ENCODE measurements at regions of chr12 and their contacts with region 1.

Region 1: GRCh38 chr12:120649442-120650232 is 9.2 kb downstream of the CABP1 start:
- DNase-seq: peak in 1 of 3 donors; percentile 19
- ATAC-seq: no peak
- H3K4me3 ChIP-seq: no peak overlapping the region
- H3K27ac ChIP-seq: no peak overlapping the region
- H3K4me1 ChIP-seq: no peaks in the 10 kb centered on the region
- H3K27me3 ChIP-seq: no peaks in the 10 kb centered on the region
- CTCF ChIP-seq: peak in 1 of 4 donors; percentile 4
- POLR2A ChIP-seq: no peak

Region 2: DNA sequence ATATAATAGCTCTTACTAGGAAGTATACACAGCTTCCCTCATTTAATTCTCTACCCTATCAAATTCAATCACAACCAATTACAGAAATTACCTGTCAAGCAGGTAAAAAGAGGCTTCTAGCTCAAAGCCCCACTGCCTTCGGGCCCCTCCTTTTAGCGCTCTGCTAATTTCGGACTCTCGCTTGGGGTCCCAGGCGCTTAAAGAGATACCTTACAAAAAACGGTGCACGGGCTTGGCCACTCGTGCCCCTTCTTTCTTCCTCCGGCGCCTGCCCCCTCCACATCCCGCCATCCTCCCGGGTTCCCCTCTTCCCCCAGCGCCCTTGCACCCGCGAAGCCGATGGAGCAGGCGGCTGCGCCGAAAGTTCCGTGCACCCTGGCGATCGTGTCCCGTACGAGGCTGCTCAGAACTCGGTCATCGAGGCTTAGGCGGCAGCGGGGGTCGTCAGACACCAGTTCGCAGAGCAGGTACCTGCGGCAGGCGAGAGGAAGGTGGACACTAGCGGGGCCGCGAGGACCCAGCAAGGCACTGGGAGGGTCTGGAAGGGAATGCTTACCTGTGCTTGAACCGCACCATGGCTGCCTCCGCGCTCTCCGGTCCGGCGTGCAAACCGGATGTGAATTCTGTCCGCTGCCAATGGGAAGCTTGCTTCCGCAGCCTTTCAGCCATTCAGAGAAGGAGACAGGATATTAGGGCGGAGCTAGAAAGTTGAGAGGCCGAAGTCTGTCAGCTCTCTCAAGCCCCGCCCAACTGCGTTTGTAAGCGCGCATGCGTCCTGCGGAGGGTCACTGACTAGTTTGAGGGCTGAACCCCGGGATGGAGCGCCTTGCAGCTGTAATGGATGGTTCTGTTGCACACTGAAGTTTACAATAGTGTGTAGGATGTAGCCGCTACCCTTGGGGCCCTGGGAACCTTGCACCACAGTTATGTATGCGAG is 68.6 kb before region 1 on chr12 and contains the start of gene POP5:
- intact Hi-C with region 1: loop called (anchors 5 to 10 kb)
- DNase-seq: peak; percentile 96 to 98 (median 98)
- ATAC-seq: peak; percentile 93 to 97 (median 96)
- H3K4me3 ChIP-seq: peak within 1 kb of the TSS; percentile 94 to 97 (median 95)
- H3K27ac ChIP-seq: peak within 1 kb of the TSS; percentile 30 to 53 (median 33)
- H3K4me1 ChIP-seq: peaks cover 0 to 28% (median 3%) of the 10 kb centered on the region in 4 donors
- H3K27me3 ChIP-seq: no peaks in the 10 kb centered on the region
- CTCF ChIP-seq: no peak
- POLR2A ChIP-seq: peak; percentile 82
- total RNA-seq, gene POP5: 14.2 to 29.2 (median 23.0) TPM

Region 3: GRCh38 chr12:120719496-120720233 is 70.0 kb after region 1 on chr12:
- intact Hi-C with region 1: loop called (anchors 5 to 10 kb)
- DNase-seq: peak; percentile 81 to 88 (median 88)
- ATAC-seq: peak; percentile 80 to 86 (median 84)
- H3K4me3 ChIP-seq: no peak overlapping the region
- H3K27ac ChIP-seq: peak overlapping the region; percentile 8 to 76 (median 17)
- H3K4me1 ChIP-seq: peaks cover 0 to 57% (median 12%) of the 10 kb centered on the region in 4 donors
- H3K27me3 ChIP-seq: no peaks in the 10 kb centered on the region
- CTCF ChIP-seq: no peak
- POLR2A ChIP-seq: no peak